ENCODE measurements at regions of chr5 and their contacts with region 1.

Region 1: DNA sequence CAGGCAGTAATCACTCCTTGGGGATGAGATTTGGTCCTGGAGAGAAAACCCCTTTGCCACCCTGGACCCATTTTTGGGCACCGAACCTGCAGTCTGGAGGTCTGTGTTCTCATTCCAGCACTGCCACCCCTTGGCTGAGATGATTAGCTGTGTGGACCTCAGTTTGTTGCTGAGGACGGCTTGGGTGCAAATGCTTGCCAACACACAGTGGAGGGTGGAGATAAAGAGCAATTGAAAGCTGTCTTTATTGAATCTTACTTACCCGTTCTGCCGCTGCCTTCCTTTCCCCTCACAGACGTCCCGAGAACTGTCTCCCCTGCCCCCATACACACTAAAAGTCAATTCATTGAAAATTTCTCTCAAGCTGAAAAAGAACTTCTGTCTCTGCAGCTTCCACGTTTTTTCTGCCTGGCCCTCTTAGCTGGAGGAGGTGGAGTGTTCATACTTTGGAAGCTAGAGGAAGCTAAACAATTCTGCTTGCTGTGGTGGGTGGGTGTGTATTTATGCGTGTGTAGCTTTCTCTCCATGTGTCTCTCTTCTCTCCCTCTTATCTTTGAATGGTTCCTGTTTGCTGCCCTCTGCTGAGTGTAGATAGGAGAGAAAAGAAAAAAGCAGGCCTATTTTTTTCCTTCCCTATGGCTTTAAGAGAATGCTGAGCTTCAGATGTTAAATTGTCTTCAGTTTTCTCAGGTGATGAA is 6.6 kb downstream of the GALNT10 start:
- DNase-seq: no peak
- H3K4me3 Mint-ChIP-seq: peak overlapping the region; percentile 73
- H3K27ac Mint-ChIP-seq: peak overlapping the region; percentile 94
- H3K4me1 Mint-ChIP-seq: peaks cover 93% of the 10 kb centered on the region
- H3K27me3 Mint-ChIP-seq: no peaks in the 10 kb centered on the region

Region 2: DNA sequence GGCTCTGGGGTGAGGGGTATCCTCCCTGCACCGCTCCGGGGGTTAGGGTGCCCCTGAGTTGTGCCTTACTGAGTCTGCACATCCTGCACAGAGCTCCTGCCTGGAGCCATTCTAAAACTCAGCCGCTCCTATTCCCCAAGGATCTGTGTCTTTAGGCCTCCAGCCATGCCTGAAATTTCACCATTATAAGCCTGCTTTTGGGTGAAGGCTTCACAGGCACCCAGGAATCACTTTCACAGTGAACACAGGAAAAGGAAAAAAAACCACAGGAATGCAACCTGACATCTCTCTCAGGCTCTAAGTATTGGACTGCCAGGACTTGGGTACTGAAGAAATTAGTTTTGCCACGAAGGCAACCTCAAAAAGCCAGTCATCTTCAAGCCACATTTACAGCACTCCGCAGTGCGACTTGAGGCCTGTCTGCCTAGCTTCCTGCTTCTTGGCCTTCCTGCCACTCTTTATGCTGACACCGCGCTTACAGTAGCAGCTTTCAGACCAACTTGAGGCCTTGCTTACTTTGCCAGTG is 24.3 kb after region 1 on chr5:
- intact Hi-C with region 1: loop called (anchors 1 kb)
- DNase-seq: peak; percentile 63
- H3K4me3 Mint-ChIP-seq: peak overlapping the region; percentile 59
- H3K27ac Mint-ChIP-seq: peak overlapping the region; percentile 95
- H3K4me1 Mint-ChIP-seq: peaks cover 66% of the 10 kb centered on the region
- H3K27me3 Mint-ChIP-seq: no peaks in the 10 kb centered on the region

Region 3: DNA sequence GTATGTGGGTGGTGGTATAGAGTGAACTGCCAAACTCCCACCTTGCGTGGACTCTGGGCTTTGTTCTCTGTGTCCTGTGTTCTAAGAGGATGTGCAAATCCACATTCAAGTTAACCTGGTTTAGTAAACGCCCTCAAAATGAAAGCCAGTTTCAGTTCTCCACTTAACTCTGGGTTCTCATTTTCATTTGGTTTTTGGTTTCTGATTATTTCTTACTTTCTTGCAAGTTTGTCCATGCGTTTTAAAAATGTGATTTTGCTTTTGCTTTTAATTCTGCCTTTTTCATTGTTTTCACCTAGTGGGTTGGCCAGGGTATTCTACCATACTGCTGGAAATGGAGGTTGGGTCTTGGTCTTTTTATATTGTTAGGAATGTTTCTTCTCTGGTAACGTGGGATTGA is 31.6 kb after region 1 on chr5:
- intact Hi-C with region 1: loop called (anchors 1 kb)
- DNase-seq: no peak
- H3K4me3 Mint-ChIP-seq: peak overlapping the region; percentile 12
- H3K27ac Mint-ChIP-seq: peak overlapping the region; percentile 24
- H3K4me1 Mint-ChIP-seq: peaks cover 55% of the 10 kb centered on the region
- H3K27me3 Mint-ChIP-seq: no peaks in the 10 kb centered on the region

Region 4: GRCh38 chr5:154278908-154279307 is 81.8 kb after region 1 on chr5:
- intact Hi-C with region 1: loop called (anchors 2 kb)
- DNase-seq: no peak
- H3K4me3 Mint-ChIP-seq: no peak overlapping the region
- H3K27ac Mint-ChIP-seq: peak overlapping the region; percentile 25
- H3K4me1 Mint-ChIP-seq: peaks cover 51% of the 10 kb centered on the region
- H3K27me3 Mint-ChIP-seq: no peaks in the 10 kb centered on the region

Region 5: DNA sequence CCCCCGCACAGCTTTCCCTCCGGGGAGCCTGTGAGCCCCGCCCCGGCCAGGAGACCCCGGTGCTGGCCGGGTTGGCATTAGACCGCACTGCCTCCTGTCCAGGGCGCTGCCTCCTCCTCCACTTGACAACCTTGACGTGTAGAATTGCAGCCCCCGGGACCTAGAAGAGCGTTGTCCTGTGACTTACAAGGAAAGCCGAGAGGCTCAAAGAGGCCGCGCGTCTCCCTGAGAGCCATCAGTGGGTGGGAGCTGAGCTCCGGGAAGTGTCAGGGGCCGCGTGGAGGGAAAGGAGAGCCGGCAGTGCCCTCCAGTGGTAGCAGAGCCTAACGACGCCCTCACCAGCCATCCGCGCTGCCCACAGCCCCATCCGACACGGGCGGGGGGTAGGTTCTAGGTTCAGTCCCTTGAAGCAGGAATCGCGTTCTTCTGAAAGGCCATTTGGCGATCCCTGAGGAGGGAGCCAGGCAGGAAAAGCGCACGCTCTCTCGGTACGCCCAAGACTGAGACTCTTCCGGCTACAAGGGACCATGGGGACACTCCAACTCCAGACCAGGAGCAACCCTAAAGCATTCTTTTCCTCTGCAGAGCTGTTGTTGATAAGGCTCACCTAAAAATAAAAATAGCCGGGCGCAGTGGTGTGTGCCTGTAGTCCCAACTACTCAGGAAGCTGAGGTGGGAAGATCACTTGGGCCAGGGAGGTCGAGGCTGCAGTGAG is 208.1 kb after region 1 on chr5:
- intact Hi-C with region 1: loop called (anchors 1 kb)
- DNase-seq: peak; percentile 50
- H3K4me3 Mint-ChIP-seq: peak overlapping the region; percentile 26
- H3K27ac Mint-ChIP-seq: peak overlapping the region; percentile 40
- H3K4me1 Mint-ChIP-seq: peaks cover 7% of the 10 kb centered on the region
- H3K27me3 Mint-ChIP-seq: no peaks in the 10 kb centered on the region

Region 6: GRCh38 chr5:154840435-154841272 is 643.5 kb after region 1 on chr5:
- intact Hi-C with region 1: no loop called
- DNase-seq: no peak
- H3K4me3 Mint-ChIP-seq: no peak overlapping the region
- H3K27ac Mint-ChIP-seq: no peak overlapping the region
- H3K4me1 Mint-ChIP-seq: no peaks in the 10 kb centered on the region
- H3K27me3 Mint-ChIP-seq: no peaks in the 10 kb centered on the region

Measured in activated T-helper 1 cell treated with anti-CD3 and anti-CD28 coated beads, Interleukin-12 subunit alpha, Interleukin-12 subunit beta, Interleukin-2, Interleukin-4 antibody, amounts not matched to agents 30 ng/mL and 10 ng/mL and 1 ng/mL, durations not matched to agents 14 hours and 24 hours and 36 hours (primary cell).